CD4-positive, alpha-beta T cell (primary cell): ENCODE measurements at regions of chr18 and their contacts with region 1.

Region 1: DNA sequence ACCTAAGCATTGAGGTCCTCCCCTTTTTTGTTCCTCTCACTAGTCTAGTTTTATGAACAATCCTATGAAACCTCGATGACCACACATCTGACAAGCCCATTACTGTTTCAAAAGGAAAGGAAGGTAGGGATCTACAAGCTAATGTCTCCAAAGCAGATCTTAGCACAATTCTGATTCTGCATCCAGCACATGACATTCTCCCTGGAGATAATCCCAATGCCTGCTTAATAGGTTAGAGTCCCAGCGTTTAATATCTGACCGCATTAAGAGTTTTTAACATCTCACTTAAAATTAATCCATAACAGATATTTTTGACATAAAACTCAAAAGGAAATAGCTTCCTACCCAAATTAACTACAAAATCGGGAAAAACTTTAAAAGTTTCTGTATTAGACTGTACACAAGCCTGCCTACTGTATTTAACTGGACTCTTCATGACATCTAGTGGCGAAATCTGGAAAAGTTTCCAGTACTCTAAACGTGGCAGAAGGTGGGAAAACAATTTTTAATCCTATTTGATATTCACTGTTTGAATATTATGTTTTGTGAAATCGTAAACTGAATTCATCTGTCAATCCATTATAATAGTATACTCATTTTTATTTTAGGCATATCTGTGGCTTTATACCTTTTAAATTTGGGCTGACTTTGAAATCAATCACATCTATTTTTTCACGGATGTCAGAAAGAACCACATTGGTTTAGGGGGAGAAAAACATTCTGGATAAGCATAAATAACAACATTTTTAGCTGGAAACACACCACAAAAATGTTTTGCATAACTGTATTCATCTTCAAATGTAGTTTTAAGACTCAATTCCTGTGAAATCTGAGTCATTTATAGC is 62.4 kb downstream of the TXNL1 start:
- DNase-seq: peak in 3 of 14 experiments; percentile 29 to 52 (median 36)
- ATAC-seq: no peak
- H3K4me3 ChIP-seq: no peak overlapping the region
- H3K4me3 Mint-ChIP-seq: no peak overlapping the region
- H3K27ac ChIP-seq: no peak overlapping the region
- H3K27ac Mint-ChIP-seq: no peak overlapping the region
- H3K4me1 ChIP-seq: no peaks in the 10 kb centered on the region
- H3K4me1 Mint-ChIP-seq: no peaks in the 10 kb centered on the region
- H3K27me3 ChIP-seq: peaks cover 4 to 5% of the 10 kb centered on the region in 2 experiments
- H3K27me3 Mint-ChIP-seq: peaks cover 17% of the 10 kb centered on the region
- CTCF ChIP-seq: peak; percentile 50

Region 2: DNA sequence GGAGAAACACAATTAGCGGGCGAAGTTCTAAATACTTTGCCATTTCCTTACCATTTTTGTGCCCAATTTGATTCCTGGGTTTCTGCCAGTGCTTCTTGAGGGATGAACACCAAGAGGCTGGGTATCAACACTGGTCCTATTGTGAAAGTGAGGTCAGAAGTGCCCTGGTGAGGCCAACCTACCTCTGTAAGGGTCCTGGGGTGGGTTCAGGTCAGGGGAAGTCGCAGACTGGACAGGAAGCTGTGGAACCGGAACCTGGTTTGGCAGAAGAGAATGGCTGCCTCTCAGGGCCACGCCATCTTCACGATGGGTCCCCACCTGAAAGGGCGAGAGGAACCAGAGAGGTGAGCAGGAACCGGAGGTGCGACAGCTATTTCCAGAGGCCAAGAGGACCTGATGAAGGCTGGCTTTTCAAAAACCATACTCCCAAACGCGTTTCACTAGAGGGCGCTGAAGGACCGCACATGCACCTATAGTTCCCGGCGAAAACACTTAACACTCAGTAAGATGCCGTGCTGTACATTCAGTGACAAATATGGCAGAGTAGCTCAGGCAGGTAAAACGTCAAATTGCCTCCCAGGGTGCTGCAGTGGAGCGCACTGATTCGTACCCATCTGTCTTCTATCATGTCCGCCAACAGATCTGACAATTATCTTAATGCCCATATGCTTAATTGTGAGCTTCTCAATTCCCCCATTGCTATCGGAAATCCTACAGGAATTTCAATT is 1341.5 kb before region 1 on chr18:
- CTCF ChIA-PET with region 1: no interaction called
- POLR2A ChIA-PET with region 1: no interaction called
- intact Hi-C with region 1: loop called (anchors 2 to 5 kb)
- DNase-seq: peak in 11 of 14 experiments; percentile 2 to 62 (median 26)
- ATAC-seq: peak; percentile 54
- H3K4me3 ChIP-seq: no peak overlapping the region
- H3K4me3 Mint-ChIP-seq: no peak overlapping the region
- H3K27ac ChIP-seq: no peak overlapping the region
- H3K27ac Mint-ChIP-seq: no peak overlapping the region
- H3K4me1 ChIP-seq: no peaks in the 10 kb centered on the region
- H3K4me1 Mint-ChIP-seq: no peaks in the 10 kb centered on the region
- H3K27me3 ChIP-seq: no peaks in the 10 kb centered on the region
- H3K27me3 Mint-ChIP-seq: no peaks in the 10 kb centered on the region
- CTCF ChIP-seq: no peak

Region 3: GRCh38 chr18:55415258-55415871 is 1160.7 kb before region 1 on chr18:
- CTCF ChIA-PET with region 1: no interaction called
- POLR2A ChIA-PET with region 1: no interaction called
- intact Hi-C with region 1: loop called (anchors 1 kb)
- DNase-seq: peak; percentile 36 to 82 (median 56)
- ATAC-seq: peak; percentile 57
- H3K4me3 ChIP-seq: no peak overlapping the region
- H3K4me3 Mint-ChIP-seq: no peak overlapping the region
- H3K27ac ChIP-seq: no peak overlapping the region
- H3K27ac Mint-ChIP-seq: no peak overlapping the region
- H3K4me1 ChIP-seq: no peaks in the 10 kb centered on the region
- H3K4me1 Mint-ChIP-seq: peaks cover 3% of the 10 kb centered on the region
- H3K27me3 ChIP-seq: no peaks in the 10 kb centered on the region
- H3K27me3 Mint-ChIP-seq: peaks cover 7% of the 10 kb centered on the region
- CTCF ChIP-seq: peak; percentile 92